ENCODE measurements at regions of chr1 and their contacts with region 1.

Region 1: GRCh38 chr1:231931846-231932454 is 305.4 kb downstream of the DISC1 start:
- DNase-seq: no peak
- H3K4me3 ChIP-seq: no peak overlapping the region
- H3K27ac ChIP-seq: peak overlapping the region; percentile 57
- H3K4me1 ChIP-seq: peaks cover 26% of the 10 kb centered on the region
- H3K27me3 ChIP-seq: no peaks in the 10 kb centered on the region
- CTCF ChIP-seq: peak; percentile 58 to 76

Region 2: DNA sequence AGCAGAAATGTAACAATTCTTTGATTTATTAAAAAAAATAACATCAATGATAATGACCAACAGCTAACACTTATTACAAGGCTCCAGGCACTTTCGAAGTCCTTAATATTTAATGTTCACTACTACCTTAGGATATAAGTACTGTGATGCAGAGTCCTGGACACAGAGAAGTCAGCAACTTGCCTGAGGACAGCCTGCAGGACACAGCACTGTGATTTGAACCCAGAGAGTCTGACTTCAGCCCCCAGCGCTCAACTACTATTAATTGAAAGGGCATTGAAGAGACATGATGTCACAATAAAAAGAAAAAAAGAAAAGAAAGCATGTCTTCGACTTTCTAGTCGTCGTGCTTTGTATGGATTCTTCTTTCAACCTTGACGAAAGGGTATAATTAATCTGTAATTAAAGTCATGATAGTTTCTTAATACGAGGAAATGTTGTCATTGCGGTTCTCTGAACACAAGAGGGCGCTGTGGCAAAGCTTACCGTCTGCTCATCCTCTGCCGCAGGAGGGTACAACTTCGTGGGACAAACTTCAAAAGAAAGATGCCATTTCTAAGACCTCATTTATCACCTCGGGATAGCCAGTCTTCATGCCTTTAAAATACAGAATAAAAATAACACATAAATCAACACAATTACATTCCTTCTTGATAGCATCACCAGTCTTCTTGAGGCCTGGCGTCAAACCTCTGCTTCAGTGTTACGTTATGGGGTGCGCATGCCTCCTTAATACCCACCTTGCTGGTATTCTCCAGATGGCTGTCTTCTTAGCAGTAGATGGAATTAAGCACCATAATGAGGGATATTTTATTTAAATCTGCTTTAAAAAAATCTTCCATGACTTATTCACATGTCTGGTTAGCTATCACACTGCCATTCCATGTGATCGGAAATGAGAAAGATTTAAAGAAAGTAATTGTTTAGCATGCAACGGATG is 65.3 kb before region 1 on chr1:
- CTCF ChIA-PET with region 1: no interaction called
- dilution Hi-C with region 1: no loop called
- in situ Hi-C with region 1: no loop called
- intact Hi-C with region 1: loop called (anchors 5 kb)
- DNase-seq: peak; percentile 17
- H3K4me3 ChIP-seq: no peak overlapping the region
- H3K27ac ChIP-seq: no peak overlapping the region
- H3K4me1 ChIP-seq: no peaks in the 10 kb centered on the region
- H3K27me3 ChIP-seq: no peaks in the 10 kb centered on the region
- CTCF ChIP-seq: peak; percentile 73 to 82

Region 3: DNA sequence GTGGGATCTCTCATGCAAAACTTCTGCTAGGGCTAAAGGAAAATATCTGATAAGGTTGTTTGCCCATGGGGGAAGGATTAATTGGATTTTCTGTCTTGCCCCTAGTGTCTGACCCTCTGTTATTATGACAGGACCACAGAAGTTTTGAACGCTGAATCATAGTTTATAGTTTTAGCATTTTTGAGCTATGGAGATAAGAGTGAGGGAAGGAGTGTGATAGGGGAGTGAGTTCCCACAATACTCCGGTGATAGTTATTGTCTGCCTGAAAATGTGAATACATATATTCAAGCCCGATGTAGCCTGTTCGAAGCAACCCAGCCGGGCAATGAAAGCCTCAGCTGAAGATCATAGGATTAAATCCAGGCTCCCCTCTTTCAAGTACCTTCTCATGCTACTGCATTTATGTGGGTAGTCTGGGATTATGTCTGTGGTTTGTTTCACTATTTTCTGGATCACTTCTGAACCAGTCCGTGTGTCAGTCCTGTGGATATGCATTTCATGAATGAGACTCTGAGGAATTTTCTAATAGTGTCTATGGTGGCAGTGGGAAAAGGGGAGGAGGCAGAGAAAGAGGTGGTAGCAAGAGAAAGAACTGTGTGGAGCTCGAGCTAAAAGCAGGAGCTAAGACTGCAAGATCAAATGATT is 46.6 kb before region 1 on chr1:
- CTCF ChIA-PET with region 1: no interaction called
- dilution Hi-C with region 1: no loop called
- in situ Hi-C with region 1: no loop called
- intact Hi-C with region 1: loop called (anchors 2 kb)
- DNase-seq: no peak
- H3K4me3 ChIP-seq: no peak overlapping the region
- H3K27ac ChIP-seq: no peak overlapping the region
- H3K4me1 ChIP-seq: no peaks in the 10 kb centered on the region
- H3K27me3 ChIP-seq: no peaks in the 10 kb centered on the region
- CTCF ChIP-seq: no peak

Region 4: GRCh38 chr1:231983588-231984193 is 51.7 kb after region 1 on chr1:
- CTCF ChIA-PET with region 1: interaction called, 6 read pairs
- dilution Hi-C with region 1: loop called (anchors 5 kb)
- in situ Hi-C with region 1: no loop called
- intact Hi-C with region 1: no loop called
- DNase-seq: no peak
- H3K4me3 ChIP-seq: no peak overlapping the region
- H3K27ac ChIP-seq: no peak overlapping the region
- H3K4me1 ChIP-seq: no peaks in the 10 kb centered on the region
- H3K27me3 ChIP-seq: no peaks in the 10 kb centered on the region
- CTCF ChIP-seq: no peak

Region 5: DNA sequence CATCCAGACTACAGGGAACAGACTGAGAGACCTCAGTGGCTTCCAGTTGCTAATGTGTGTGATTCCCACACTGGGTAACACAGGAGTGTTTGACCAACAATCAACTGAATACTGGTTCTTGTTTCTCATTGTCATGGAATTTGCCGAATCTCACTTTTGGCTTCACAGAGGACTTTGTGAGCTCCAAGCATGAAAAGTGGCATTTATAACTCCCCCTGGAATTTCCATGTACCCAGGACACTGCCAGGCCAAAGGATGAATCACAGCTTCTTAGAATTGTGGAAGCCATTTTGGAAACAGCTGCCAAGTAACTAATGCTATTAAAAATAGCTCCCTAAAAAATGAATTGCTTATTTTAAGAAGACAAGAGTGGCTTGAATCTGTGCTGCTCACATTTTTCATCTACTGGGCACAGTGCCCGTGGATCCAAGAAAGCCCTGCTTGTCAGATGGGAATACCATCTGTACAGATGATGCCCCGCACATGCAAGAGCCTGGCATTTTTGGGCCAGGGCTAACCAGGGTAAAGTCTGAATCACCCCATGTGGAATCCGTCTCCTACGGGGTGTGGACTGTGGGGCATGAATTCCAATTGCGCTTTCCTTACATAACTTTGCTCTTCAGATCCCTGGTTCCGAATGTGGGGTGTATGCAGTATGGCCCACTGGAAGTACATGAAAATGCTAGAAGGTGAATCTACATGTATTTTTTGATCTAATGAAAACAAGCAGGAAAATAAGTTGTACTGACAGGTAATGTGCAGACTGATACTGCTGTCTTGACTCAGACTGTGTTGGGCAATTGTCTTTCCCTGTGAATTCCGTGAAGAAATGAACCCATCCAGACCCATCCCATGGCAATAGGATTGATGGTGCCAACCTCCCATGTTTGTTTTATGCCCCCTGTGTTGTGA is 210.7 kb after region 1 on chr1:
- CTCF ChIA-PET with region 1: no interaction called
- dilution Hi-C with region 1: no loop called
- in situ Hi-C with region 1: no loop called
- intact Hi-C with region 1: loop called (anchors 10 kb)
- DNase-seq: peak; percentile 94
- H3K4me3 ChIP-seq: no peak overlapping the region
- H3K27ac ChIP-seq: peak overlapping the region; percentile 88
- H3K4me1 ChIP-seq: peaks cover 15% of the 10 kb centered on the region
- H3K27me3 ChIP-seq: no peaks in the 10 kb centered on the region
- CTCF ChIP-seq: no peak

Measured in mammary epithelial cell (primary cell).